PC-9 (cell line): ENCODE measurements at regions of chr7 and their contacts with region 1.

Region 1: GRCh38 chr7:83655951-83656556 is 7.1 kb upstream of the SEMA3E start:
- DNase-seq: peak in 1 of 2 experiments; percentile 40
- H3K4me3 ChIP-seq: no peak overlapping the region
- H3K27ac ChIP-seq: no peak overlapping the region
- H3K4me1 ChIP-seq: no peaks in the 10 kb centered on the region
- H3K27me3 ChIP-seq: no peaks in the 10 kb centered on the region
- CTCF ChIP-seq: peak; percentile 89

Region 2: GRCh38 chr7:82740246-82740848 is 915.7 kb before region 1 on chr7:
- CTCF ChIA-PET with region 1: no interaction called
- POLR2A ChIA-PET with region 1: no interaction called
- intact Hi-C with region 1: loop called (anchors 5 kb)
- DNase-seq: peak; percentile 39 to 55
- H3K4me3 ChIP-seq: no peak overlapping the region
- H3K27ac ChIP-seq: no peak overlapping the region
- H3K4me1 ChIP-seq: no peaks in the 10 kb centered on the region
- H3K27me3 ChIP-seq: no peaks in the 10 kb centered on the region
- CTCF ChIP-seq: peak; percentile 81

Region 3: DNA sequence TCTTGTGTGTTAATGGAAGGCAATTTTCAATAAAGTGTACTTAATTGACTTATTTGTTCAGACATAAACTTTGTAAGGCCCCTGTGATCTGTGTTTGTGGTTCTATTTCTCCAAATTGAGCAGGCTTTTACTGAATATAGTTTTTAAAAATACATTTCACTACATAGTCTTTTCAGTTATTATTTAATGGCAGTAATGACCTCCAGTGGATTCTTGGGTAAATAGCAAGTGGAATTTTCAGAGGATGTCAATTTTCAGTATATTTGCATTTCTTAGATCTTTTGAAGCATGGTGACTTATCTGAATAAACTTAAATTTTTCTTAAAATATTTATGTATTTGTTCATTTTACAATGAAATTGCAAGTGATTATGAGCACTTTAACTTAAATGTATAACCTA is 290.3 kb before region 1 on chr7:
- CTCF ChIA-PET with region 1: no interaction called
- POLR2A ChIA-PET with region 1: no interaction called
- intact Hi-C with region 1: loop called (anchors 1 kb)
- DNase-seq: no peak
- H3K4me3 ChIP-seq: no peak overlapping the region
- H3K27ac ChIP-seq: no peak overlapping the region
- H3K4me1 ChIP-seq: no peaks in the 10 kb centered on the region
- H3K27me3 ChIP-seq: no peaks in the 10 kb centered on the region
- CTCF ChIP-seq: peak; percentile 35; the same call in 1 of the 2 replicates

Region 4: GRCh38 chr7:83684894-83685293 is 28.8 kb after region 1 on chr7:
- CTCF ChIA-PET with region 1: no interaction called
- POLR2A ChIA-PET with region 1: no interaction called
- intact Hi-C with region 1: loop called (anchors 1 kb)
- DNase-seq: peak; percentile 86 to 99
- H3K4me3 ChIP-seq: no peak overlapping the region; the same call in 1 of the 2 replicates
- H3K27ac ChIP-seq: peak overlapping the region; percentile 95
- H3K4me1 ChIP-seq: peaks cover 29% of the 10 kb centered on the region
- H3K27me3 ChIP-seq: no peaks in the 10 kb centered on the region
- CTCF ChIP-seq: no peak

Region 5: GRCh38 chr7:83913174-83913573 is 257.1 kb after region 1 on chr7:
- CTCF ChIA-PET with region 1: no interaction called
- POLR2A ChIA-PET with region 1: no interaction called
- intact Hi-C with region 1: loop called (anchors 5 kb)
- DNase-seq: no peak
- H3K4me3 ChIP-seq: no peak overlapping the region
- H3K27ac ChIP-seq: no peak overlapping the region
- H3K4me1 ChIP-seq: no peaks in the 10 kb centered on the region
- H3K27me3 ChIP-seq: no peaks in the 10 kb centered on the region
- CTCF ChIP-seq: no peak

Region 6: GRCh38 chr7:84589012-84589411 is 933.0 kb after region 1 on chr7:
- CTCF ChIA-PET with region 1: no interaction called
- POLR2A ChIA-PET with region 1: no interaction called
- intact Hi-C with region 1: no loop called
- DNase-seq: no peak
- H3K4me3 ChIP-seq: no peak overlapping the region
- H3K27ac ChIP-seq: no peak overlapping the region
- H3K4me1 ChIP-seq: no peaks in the 10 kb centered on the region
- H3K27me3 ChIP-seq: no peaks in the 10 kb centered on the region
- CTCF ChIP-seq: no peak